ENCODE measurements at regions of chr7 and their contacts with region 1.

Region 1: GRCh38 chr7:2613931-2614600 is 17.7 kb upstream of the TTYH3 start:
- DNase-seq: peak; percentile 73 to 97
- ATAC-seq: peak; percentile 88 to 89
- H3K4me3 ChIP-seq: peak overlapping the region; percentile 11 to 32 (median 26)
- H3K27ac ChIP-seq: peak overlapping the region; percentile 75 to 94 (median 88)
- H3K4me1 ChIP-seq: peaks cover 21 to 25% of the 10 kb centered on the region in 2 donors
- H3K27me3 ChIP-seq: no peaks in the 10 kb centered on the region
- CTCF ChIP-seq: no peak
- POLR2A ChIP-seq: no peak

Region 2: DNA sequence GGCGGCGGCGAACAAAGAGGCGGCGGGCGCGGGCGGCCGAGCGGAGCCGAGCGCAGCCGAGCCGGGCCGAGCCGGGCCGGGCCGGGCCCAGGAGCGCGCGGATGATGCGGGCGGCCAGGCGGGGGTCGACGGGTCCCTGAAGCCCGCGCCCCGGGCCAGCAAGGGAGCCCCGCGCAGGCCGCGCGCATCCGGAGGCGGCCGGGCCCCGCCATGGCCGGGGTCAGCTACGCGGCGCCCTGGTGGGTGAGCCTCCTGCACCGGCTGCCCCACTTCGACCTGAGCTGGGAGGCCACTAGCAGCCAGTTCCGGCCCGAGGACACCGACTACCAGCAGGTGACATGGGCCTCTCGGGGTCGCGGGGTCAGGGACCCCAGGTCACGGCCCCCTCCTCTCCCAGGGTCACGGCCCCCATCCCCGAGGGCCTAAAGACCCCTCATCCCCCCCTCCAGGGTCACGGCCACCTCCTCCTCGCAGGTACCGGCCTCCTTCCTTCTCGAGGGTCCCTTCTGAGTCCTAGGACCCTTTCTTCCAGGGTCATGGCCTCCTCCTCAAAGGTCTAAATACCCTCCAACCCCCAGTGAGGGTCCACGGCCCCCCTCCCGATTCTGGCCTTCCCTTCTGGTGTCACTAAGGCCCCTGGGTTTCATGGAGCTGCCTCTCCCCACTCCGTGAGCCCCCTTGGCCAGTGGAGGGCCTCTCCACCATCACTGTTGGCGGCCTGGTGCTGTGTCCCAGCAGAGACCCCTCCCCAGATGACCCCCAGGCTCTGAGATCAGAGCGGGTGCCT is 18.1 kb after region 1 on chr7 and contains the start of gene TTYH3:
- in situ Hi-C with region 1: no loop called
- intact Hi-C with region 1: loop called (anchors 1 kb)
- DNase-seq: no peak
- ATAC-seq: peak; percentile 20 to 28
- H3K4me3 ChIP-seq: peak within 1 kb of the TSS; percentile 57 to 76 (median 68)
- H3K27ac ChIP-seq: peak within 1 kb of the TSS; percentile 65 to 76 (median 71)
- H3K4me1 ChIP-seq: peaks cover 31 to 43% of the 10 kb centered on the region in 2 donors
- H3K27me3 ChIP-seq: no peaks in the 10 kb centered on the region
- CTCF ChIP-seq: no peak
- POLR2A ChIP-seq: peak in 1 of 2 donors; percentile 58
- total RNA-seq, gene TTYH3: 2.9 to 14.8 (median 5.2) TPM

Region 3: DNA sequence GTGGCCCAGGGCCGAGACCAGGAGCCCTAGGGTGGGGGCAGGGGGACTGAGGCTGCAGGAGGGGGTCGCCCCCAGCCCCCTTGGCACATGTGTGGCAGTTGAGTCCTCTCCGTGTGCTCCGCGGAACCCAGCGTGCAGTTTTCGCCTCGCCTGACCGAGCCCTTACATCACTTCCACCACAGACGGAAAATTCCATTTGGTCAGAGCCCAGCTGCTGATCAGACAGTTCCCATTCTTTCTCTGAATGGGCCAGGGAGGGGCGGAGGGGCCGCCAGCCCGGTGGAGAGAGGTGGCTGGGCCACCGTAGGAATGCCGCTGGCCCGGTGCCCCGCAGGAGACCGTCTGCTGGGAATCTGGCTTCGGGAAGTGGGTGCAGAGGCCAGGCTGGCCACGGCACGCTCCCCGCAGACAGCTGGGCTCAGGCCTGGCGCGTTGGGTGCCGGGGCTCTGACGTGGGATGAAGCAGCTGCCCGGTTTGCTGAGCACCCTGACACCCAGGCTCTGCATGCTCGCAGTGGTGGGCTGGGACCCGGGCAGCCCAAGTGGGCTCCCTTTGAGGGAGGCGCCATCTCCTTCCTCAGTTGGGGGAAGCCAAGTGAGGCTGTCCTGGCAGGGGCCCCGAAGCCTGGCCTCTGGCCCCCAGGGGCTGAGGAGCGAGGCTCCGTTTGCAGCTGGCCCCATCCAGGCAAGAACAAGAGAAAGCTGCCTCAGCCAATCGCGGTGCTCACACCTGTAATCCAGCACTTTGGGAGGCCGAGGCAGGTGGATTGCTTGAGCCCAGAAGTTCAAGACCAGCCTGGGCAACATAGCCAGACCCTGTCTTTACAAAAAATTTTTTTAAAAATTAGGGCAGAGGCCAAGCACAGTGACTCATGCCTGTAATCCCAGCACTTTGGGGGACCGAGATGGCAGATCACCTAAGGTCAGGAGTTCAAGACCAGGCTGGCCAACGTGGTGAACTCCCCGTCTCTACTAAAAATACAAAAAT is 27.6 kb after region 1 on chr7:
- in situ Hi-C with region 1: no loop called
- intact Hi-C with region 1: loop called (anchors 1 kb)
- DNase-seq: peak; percentile 76 to 93
- ATAC-seq: peak; percentile 82 to 84
- H3K4me3 ChIP-seq: peak overlapping the region; percentile 32 to 44 (median 34)
- H3K27ac ChIP-seq: peak overlapping the region; percentile 72 to 81 (median 78)
- H3K4me1 ChIP-seq: peaks cover 37 to 48% of the 10 kb centered on the region in 2 donors
- H3K27me3 ChIP-seq: no peaks in the 10 kb centered on the region
- CTCF ChIP-seq: peak in 1 of 5 experiments; percentile 16
- POLR2A ChIP-seq: peak in 1 of 2 donors; percentile 18

Region 4: DNA sequence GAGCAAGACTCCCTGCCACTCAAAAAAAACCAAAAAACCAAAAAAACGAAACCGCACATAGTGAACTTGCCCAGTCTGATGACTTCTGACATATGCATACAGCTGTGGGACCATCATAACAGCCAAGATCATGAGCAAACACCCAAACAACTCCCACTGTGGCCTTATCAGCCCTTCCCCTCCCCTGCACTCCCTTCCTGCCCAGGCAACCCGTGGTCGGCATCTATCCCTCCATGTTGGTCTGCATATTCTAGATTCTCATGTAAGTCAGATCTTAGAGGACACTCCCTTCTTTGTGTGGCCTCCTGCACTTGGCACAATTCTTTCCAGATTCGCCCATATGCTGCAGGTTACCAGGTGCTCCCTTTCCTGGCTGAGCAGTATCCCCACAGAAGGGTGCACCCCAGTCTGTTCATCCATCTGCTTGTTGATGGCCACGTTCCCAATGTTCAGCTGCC is 157.2 kb after region 1 on chr7:
- in situ Hi-C with region 1: no loop called
- intact Hi-C with region 1: no loop called
- DNase-seq: no peak
- ATAC-seq: no peak
- H3K4me3 ChIP-seq: no peak overlapping the region
- H3K27ac ChIP-seq: no peak overlapping the region
- H3K4me1 ChIP-seq: no peaks in the 10 kb centered on the region
- H3K27me3 ChIP-seq: no peaks in the 10 kb centered on the region
- CTCF ChIP-seq: no peak
- POLR2A ChIP-seq: no peak

Region 5: DNA sequence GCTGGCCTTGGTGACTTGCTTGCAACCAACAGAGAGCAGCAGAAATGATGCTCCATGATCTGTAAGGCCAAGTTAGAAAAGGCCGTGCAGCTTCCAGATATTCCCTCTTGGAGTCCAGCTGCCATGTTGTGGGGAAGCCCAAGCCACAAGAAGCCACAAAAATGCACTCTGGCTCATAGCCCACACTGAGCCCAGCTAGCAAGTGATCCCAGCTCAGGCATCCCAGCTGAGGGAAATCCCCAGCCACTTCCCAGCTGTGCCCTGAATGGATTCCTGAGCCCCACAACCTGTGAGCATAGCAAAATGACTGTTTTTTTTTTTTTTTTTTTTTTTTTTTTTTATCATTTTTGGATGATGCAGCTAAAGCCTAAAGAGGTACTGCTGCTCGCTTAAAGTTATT is 675.9 kb after region 1 on chr7:
- in situ Hi-C with region 1: no loop called
- intact Hi-C with region 1: no loop called
- DNase-seq: no peak
- ATAC-seq: no peak
- H3K4me3 ChIP-seq: no peak overlapping the region
- H3K27ac ChIP-seq: no peak overlapping the region
- H3K4me1 ChIP-seq: no peaks in the 10 kb centered on the region
- H3K27me3 ChIP-seq: peaks cover 0 to 4% (median 0%) of the 10 kb centered on the region in 3 donors
- CTCF ChIP-seq: no peak
- POLR2A ChIP-seq: no peak